Heart right ventricle (tissue), 16 donors: ENCODE measurements at regions of chr5 and their contacts with region 1.

Region 1: GRCh38 chr5:151811593-151812321 is 40.0 kb downstream of the G3BP1 start:
- DNase-seq: peak in 1 of 2 donors; percentile 31
- ATAC-seq: peak; percentile 79 to 92 (median 90)
- H3K4me3 ChIP-seq: no peak overlapping the region
- H3K27ac ChIP-seq: peak overlapping the region in 7 of 10 donors; percentile 18 to 66 (median 51)
- H3K4me1 ChIP-seq: peaks cover 0 to 44% (median 28%) of the 10 kb centered on the region in 9 donors
- H3K27me3 ChIP-seq: no peaks in the 10 kb centered on the region
- CTCF ChIP-seq: no peak

Region 2: GRCh38 chr5:151764801-151765200 is 47.0 kb before region 1 on chr5:
- intact Hi-C with region 1: no loop called
- DNase-seq: no peak
- ATAC-seq: no peak
- H3K4me3 ChIP-seq: no peak overlapping the region
- H3K27ac ChIP-seq: no peak overlapping the region
- H3K4me1 ChIP-seq: peaks cover 0 to 4% (median 1%) of the 10 kb centered on the region in 9 donors
- H3K27me3 ChIP-seq: no peaks in the 10 kb centered on the region
- CTCF ChIP-seq: no peak

Region 3: DNA sequence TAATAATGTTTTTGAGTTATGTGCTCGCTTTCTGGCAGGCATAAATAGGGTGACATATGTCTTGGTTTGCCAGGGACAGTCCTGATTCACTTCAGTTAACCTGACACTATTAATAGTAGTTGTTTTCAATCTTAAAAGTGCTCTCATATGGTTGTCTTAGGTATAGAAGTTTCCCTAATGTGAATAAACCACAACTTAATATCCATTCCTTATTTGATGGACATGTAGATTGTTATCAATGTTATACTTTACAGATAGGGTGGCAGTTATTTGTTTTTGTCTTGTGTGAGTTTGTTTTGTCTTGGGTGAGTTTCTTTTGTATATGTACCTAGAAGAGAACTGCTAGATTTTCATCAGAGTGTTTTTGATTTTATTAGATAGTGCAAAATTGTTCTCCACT is 32.1 kb before region 1 on chr5:
- intact Hi-C with region 1: loop called in 1 of 10 experiments (anchors 5 kb)
- DNase-seq: no peak
- ATAC-seq: peak in 1 of 8 donors; percentile 52
- H3K4me3 ChIP-seq: no peak overlapping the region
- H3K27ac ChIP-seq: no peak overlapping the region
- H3K4me1 ChIP-seq: peaks cover 4 to 99% (median 88%) of the 10 kb centered on the region in 9 donors
- H3K27me3 ChIP-seq: no peaks in the 10 kb centered on the region
- CTCF ChIP-seq: no peak

Region 4: GRCh38 chr5:151947925-151948608 is 136.3 kb after region 1 on chr5:
- intact Hi-C with region 1: no loop called
- DNase-seq: no peak
- ATAC-seq: peak in 1 of 8 donors; percentile 38
- H3K4me3 ChIP-seq: no peak overlapping the region
- H3K27ac ChIP-seq: no peak overlapping the region
- H3K4me1 ChIP-seq: peaks cover 0 to 2% (median 0%) of the 10 kb centered on the region in 9 donors
- H3K27me3 ChIP-seq: no peaks in the 10 kb centered on the region
- CTCF ChIP-seq: no peak